Activated naive CD4-positive, alpha-beta T cell treated with anti-CD3 and anti-CD28 coated beads for 36 hours (primary cell): ENCODE measurements at regions of chr16 and their contacts with region 1.

Region 1: DNA sequence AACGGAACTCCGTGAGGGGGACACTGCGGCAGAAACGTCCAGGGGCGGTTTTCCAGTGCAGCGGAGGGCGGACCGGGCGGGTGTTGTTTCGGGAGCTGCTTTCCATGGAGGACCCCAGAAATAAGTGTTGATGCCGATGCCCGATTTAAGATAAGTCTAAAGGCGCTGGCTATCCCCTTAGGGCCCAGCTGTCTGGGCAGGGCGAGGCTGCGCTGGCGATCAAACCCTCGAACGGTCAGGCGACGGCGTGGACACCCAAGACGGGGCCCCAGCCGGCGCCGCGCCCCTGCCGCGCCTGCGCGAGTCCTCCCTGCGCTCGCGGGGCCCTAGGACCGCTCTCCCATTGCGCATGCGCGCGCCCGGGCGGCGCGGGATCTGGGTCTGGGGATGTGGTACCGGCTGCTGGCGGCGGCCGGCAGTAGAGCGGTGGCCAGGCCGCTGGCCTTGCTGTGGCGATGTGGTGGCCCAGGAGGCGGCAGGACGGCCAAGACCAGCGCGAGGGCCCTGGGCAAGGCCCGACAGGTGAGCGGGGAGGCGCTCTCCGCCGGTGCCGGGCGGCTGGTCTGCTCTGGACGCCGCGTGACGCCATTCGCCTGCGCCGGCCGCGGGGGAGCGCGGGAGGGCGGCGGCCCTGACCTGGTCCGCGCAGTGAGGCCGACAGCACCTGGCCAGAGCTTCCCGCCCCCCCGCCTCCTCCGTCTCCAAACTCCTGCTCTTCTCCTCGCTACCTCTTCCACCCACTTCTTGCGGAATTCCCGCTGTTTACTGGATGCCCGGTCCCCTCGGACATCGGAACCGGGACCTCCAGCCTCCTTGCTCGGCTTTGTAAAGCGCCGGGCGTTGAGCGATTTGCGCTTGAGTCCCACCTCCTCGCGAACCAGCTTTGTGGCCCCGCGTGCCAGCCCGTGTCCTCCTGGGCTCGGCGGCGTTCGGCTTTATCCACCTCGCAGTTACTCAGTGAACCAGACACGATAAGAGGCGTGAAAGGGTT is 24.0 kb downstream of the DEF8 start:
- DNase-seq: peak; percentile 89
- H3K4me3 Mint-ChIP-seq: peak overlapping the region; percentile 98
- H3K27ac Mint-ChIP-seq: peak overlapping the region; percentile 93
- H3K4me1 Mint-ChIP-seq: peaks cover 38% of the 10 kb centered on the region
- H3K27me3 Mint-ChIP-seq: no peaks in the 10 kb centered on the region

Region 2: GRCh38 chr16:89534252-89534756 is 438.2 kb before region 1 on chr16:
- CTCF ChIA-PET with region 1: no interaction called
- intact Hi-C with region 1: no loop called
- DNase-seq: peak; percentile 26
- H3K4me3 Mint-ChIP-seq: no peak overlapping the region
- H3K27ac Mint-ChIP-seq: peak overlapping the region; percentile 55
- H3K4me1 Mint-ChIP-seq: peaks cover 21% of the 10 kb centered on the region
- H3K27me3 Mint-ChIP-seq: no peaks in the 10 kb centered on the region

Region 3: DNA sequence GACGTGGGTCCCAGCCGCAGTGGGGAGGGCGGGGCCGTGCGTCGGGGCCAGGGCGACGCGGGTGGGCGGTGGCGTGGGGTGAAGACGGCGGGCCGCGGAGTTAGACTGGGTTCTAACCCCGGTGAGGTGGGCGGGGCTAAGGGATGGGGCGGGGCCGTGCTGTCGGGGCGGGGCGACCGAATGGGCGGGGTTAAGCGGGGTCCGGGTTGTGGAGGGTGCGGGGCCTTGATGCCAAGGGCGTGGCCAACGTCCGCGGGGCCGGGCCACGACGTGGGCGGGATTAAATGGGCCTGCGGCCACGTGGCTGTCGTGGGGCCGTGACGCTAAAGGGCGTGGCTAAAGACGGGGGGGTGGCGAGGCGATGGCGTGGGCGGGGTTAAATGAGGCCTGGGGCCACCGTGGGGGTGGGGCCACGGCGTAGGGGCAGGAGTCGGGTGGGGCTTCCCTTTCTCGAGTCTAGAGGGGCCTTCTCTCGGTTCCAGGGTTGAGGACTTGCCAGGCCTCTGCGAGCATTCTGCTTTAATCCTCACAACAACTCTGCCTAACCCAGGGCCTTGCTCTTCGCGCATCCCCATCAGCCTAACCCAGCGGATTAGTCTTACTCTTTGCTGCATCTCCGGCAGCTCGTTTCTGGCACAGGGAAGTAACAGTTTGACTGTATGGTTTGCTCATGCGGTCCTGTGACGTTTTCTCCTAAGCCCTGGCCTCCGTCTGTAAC is 98.4 kb before region 1 on chr16:
- CTCF ChIA-PET with region 1: no interaction called
- intact Hi-C with region 1: no loop called
- DNase-seq: peak; percentile 95
- H3K4me3 Mint-ChIP-seq: peak overlapping the region; percentile 91
- H3K27ac Mint-ChIP-seq: peak overlapping the region; percentile 95
- H3K4me1 Mint-ChIP-seq: peaks cover 13% of the 10 kb centered on the region
- H3K27me3 Mint-ChIP-seq: no peaks in the 10 kb centered on the region

Region 4: GRCh38 chr16:89945670-89946069 is 26.9 kb before region 1 on chr16:
- CTCF ChIA-PET with region 1: interaction called, 3 read pairs
- intact Hi-C with region 1: loop called (anchors 1 kb)
- DNase-seq: no peak
- H3K4me3 Mint-ChIP-seq: no peak overlapping the region
- H3K27ac Mint-ChIP-seq: no peak overlapping the region
- H3K4me1 Mint-ChIP-seq: peaks cover 8% of the 10 kb centered on the region
- H3K27me3 Mint-ChIP-seq: peaks cover 18% of the 10 kb centered on the region

Region 5: GRCh38 chr16:90077226-90077756 is 104.8 kb after region 1 on chr16 and contains the start of gene PRDM7:
- CTCF ChIA-PET with region 1: no interaction called
- intact Hi-C with region 1: loop called (anchors 1 kb)
- DNase-seq: peak; percentile 99
- H3K4me3 Mint-ChIP-seq: peak within 1 kb of the TSS; percentile 79
- H3K27ac Mint-ChIP-seq: peak within 1 kb of the TSS; percentile 68
- H3K4me1 Mint-ChIP-seq: peaks cover 27% of the 10 kb centered on the region
- H3K27me3 Mint-ChIP-seq: peaks cover 12% of the 10 kb centered on the region
- total RNA-seq, gene PRDM7: not detected